ENCODE measurements at regions of chr2 and their contacts with region 1.

Region 1: GRCh38 chr2:75710577-75711253 is at the start of gene GCFC2:
- DNase-seq: peak; percentile 96
- H3K4me3 Mint-ChIP-seq: peak within 1 kb of the TSS; percentile 95
- H3K27ac Mint-ChIP-seq: peak within 1 kb of the TSS; percentile 98
- H3K4me1 Mint-ChIP-seq: peaks cover 22% of the 10 kb centered on the region
- H3K27me3 Mint-ChIP-seq: peaks cover 6% of the 10 kb centered on the region
- total RNA-seq, gene GCFC2: 34.9 and 42.0 TPM in 2 replicates

Region 2: GRCh38 chr2:74958274-74959105 is 752.2 kb before region 1 on chr2 and contains the start of gene POLE4:
- intact Hi-C with region 1: loop called (anchors 2 kb)
- DNase-seq: peak; percentile 98
- H3K4me3 Mint-ChIP-seq: peak within 1 kb of the TSS; percentile 82
- H3K27ac Mint-ChIP-seq: peak within 1 kb of the TSS; percentile 86
- H3K4me1 Mint-ChIP-seq: peaks cover 47% of the 10 kb centered on the region
- H3K27me3 Mint-ChIP-seq: no peaks in the 10 kb centered on the region
- total RNA-seq, gene POLE4: 53.1 and 58.3 TPM in 2 replicates

Region 3: GRCh38 chr2:75646583-75647425 is 63.9 kb before region 1 on chr2 and contains the start of gene MRPL19:
- intact Hi-C with region 1: loop called (anchors 1 kb)
- DNase-seq: peak; percentile 93
- H3K4me3 Mint-ChIP-seq: peak within 1 kb of the TSS; percentile 94
- H3K27ac Mint-ChIP-seq: peak within 1 kb of the TSS; percentile 97
- H3K4me1 Mint-ChIP-seq: peaks cover 17% of the 10 kb centered on the region
- H3K27me3 Mint-ChIP-seq: no peaks in the 10 kb centered on the region
- total RNA-seq, gene MRPL19: 70.6 and 76.8 TPM in 2 replicates

Region 4: GRCh38 chr2:75676464-75676863 is 34.3 kb before region 1 on chr2:
- intact Hi-C with region 1: loop called (anchors 1 kb)
- DNase-seq: no peak
- H3K4me3 Mint-ChIP-seq: no peak overlapping the region
- H3K27ac Mint-ChIP-seq: no peak overlapping the region
- H3K4me1 Mint-ChIP-seq: peaks cover 6% of the 10 kb centered on the region
- H3K27me3 Mint-ChIP-seq: no peaks in the 10 kb centered on the region